ENCODE measurements at regions of chr1 and their contacts with region 1.

Region 1: GRCh38 chr1:205061665-205062069 is 18.7 kb downstream of the CNTN2 start:
- DNase-seq: peak; percentile 89
- ATAC-seq: peak; percentile 89
- H3K4me3 Mint-ChIP-seq: no peak overlapping the region
- H3K27ac Mint-ChIP-seq: no peak overlapping the region
- H3K4me1 Mint-ChIP-seq: peaks cover 3% of the 10 kb centered on the region
- H3K27me3 Mint-ChIP-seq: no peaks in the 10 kb centered on the region

Region 2: GRCh38 chr1:204975570-204976235 is 86.0 kb before region 1 on chr1:
- CTCF ChIA-PET with region 1: interaction called, 30 read pairs
- POLR2A ChIA-PET with region 1: no interaction called
- intact Hi-C with region 1: loop called in 1 of 2 experiments (anchors 1 kb)
- DNase-seq: peak; percentile 74
- ATAC-seq: peak; percentile 85
- H3K4me3 Mint-ChIP-seq: no peak overlapping the region
- H3K27ac Mint-ChIP-seq: no peak overlapping the region
- H3K4me1 Mint-ChIP-seq: peaks cover 2% of the 10 kb centered on the region
- H3K27me3 Mint-ChIP-seq: peaks cover 2% of the 10 kb centered on the region

Region 3: DNA sequence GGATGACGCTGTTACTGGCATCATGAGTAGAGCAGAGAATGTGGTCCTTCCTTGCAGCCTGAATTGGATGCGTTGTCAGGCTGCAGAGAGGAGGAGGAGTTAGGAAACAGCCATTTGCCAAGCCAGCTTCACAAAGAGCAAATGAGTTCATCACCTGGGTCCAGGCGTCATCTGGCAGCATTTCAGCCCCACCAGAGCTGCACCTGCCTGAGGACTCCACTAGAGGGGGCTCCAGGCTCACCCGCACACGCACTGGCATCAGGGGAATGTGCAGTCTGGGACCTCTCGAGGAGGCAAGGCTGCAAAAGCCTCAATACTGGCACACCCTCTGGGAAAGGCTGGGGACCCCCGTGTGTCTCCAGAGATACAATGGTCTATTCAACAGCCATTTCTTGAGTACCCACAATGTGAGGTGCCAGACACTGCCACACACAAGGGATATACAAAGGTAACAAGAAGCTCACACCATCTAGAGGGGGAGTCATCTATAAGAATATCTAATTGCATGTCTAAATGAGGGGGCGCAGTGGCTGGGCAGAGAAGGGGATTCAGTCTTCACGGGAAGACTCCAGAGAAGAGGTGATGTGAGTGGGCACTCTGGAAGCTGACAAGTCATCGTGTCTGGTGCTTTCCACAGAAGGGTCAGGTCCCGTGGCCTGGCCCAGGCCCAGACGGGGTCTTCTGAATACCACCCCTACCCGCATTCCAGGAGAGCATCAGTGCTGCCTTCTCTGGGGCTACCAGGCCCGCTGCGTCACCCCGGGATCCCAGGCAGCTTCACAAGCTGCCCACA is 72.2 kb before region 1 on chr1:
- CTCF ChIA-PET with region 1: interaction called, 59 read pairs
- POLR2A ChIA-PET with region 1: interaction called, 3 read pairs
- intact Hi-C with region 1: loop called (anchors 1 kb)
- DNase-seq: peak; percentile 82
- ATAC-seq: peak; percentile 89
- H3K4me3 Mint-ChIP-seq: no peak overlapping the region
- H3K27ac Mint-ChIP-seq: no peak overlapping the region
- H3K4me1 Mint-ChIP-seq: peaks cover 11% of the 10 kb centered on the region
- H3K27me3 Mint-ChIP-seq: peaks cover 5% of the 10 kb centered on the region

Region 4: GRCh38 chr1:205074513-205074912 is 12.8 kb after region 1 on chr1:
- CTCF ChIA-PET with region 1: interaction called, 21 read pairs
- POLR2A ChIA-PET with region 1: no interaction called
- intact Hi-C with region 1: no loop called
- DNase-seq: no peak
- ATAC-seq: no peak
- H3K4me3 Mint-ChIP-seq: no peak overlapping the region
- H3K27ac Mint-ChIP-seq: no peak overlapping the region
- H3K4me1 Mint-ChIP-seq: no peaks in the 10 kb centered on the region
- H3K27me3 Mint-ChIP-seq: no peaks in the 10 kb centered on the region